IMR-90 (cell line): ENCODE measurements at regions of chr2 and their contacts with region 1.

Region 1: DNA sequence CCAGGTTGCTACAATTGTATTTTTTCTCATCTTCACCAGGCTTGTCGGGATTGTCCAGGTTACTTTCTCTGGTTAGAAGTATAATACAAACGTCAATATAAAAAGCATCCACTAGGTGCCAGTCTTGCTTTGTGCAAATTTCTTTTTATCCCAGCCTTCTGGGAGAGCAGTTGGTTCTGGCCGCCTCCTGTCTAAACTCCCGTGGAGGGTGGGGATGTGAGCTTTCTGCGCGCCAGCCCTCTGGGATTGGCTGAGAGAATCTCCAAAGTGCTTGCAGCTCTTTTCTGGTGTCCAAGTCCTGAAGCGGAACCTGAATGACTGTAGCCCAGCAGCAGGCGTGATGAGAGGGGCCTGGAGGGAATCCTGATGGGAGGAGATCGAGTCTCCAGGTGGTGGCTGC is 22.4 kb upstream of the TOGARAM2 start:
- DNase-seq: peak; percentile 74
- ATAC-seq: peak; percentile 92
- H3K4me3 ChIP-seq: no peak overlapping the region
- H3K27ac ChIP-seq: no peak overlapping the region
- H3K4me1 ChIP-seq: peaks cover 2% of the 10 kb centered on the region; the same call in 1 of the 2 replicates
- H3K27me3 ChIP-seq: no peaks in the 10 kb centered on the region
- CTCF ChIP-seq: peak; percentile 79
- POLR2A ChIP-seq: peak; percentile 53; the same call in 1 of the 2 replicates
- RAD21 ChIP-seq: peak; percentile 98

Region 2: GRCh38 chr2:29196792-29197788 is 238.4 kb after region 1 on chr2:
- CTCF ChIA-PET with region 1: no interaction called
- POLR2A ChIA-PET with region 1: no interaction called
- dilution Hi-C with region 1: no loop called
- in situ Hi-C with region 1: loop called (anchors 5 kb)
- intact Hi-C with region 1: loop called (anchors 1 kb)
- DNase-seq: peak; percentile 47
- ATAC-seq: peak; percentile 80
- H3K4me3 ChIP-seq: no peak overlapping the region
- H3K27ac ChIP-seq: no peak overlapping the region
- H3K4me1 ChIP-seq: peaks cover 3% of the 10 kb centered on the region; the same call in 1 of the 2 replicates
- H3K27me3 ChIP-seq: no peaks in the 10 kb centered on the region
- CTCF ChIP-seq: peak; percentile 73
- POLR2A ChIP-seq: no peak
- RAD21 ChIP-seq: peak; percentile 93

Region 3: GRCh38 chr2:29627279-29627711 is 668.6 kb after region 1 on chr2:
- CTCF ChIA-PET with region 1: no interaction called
- POLR2A ChIA-PET with region 1: no interaction called
- dilution Hi-C with region 1: no loop called
- in situ Hi-C with region 1: no loop called
- intact Hi-C with region 1: loop called (anchors 2 kb)
- DNase-seq: peak; percentile 91
- ATAC-seq: peak; percentile 61
- H3K4me3 ChIP-seq: no peak overlapping the region
- H3K27ac ChIP-seq: no peak overlapping the region; the same call in 1 of the 2 replicates
- H3K4me1 ChIP-seq: peaks cover 11% of the 10 kb centered on the region
- H3K27me3 ChIP-seq: no peaks in the 10 kb centered on the region
- CTCF ChIP-seq: no peak
- POLR2A ChIP-seq: no peak
- RAD21 ChIP-seq: no peak

Region 4: GRCh38 chr2:29923110-29923721 is 964.5 kb after region 1 on chr2:
- CTCF ChIA-PET with region 1: no interaction called
- POLR2A ChIA-PET with region 1: no interaction called
- dilution Hi-C with region 1: no loop called
- in situ Hi-C with region 1: no loop called
- intact Hi-C with region 1: loop called (anchors 5 kb)
- DNase-seq: peak; percentile 54
- ATAC-seq: peak; percentile 50; the same call in 1 of the 2 replicates
- H3K4me3 ChIP-seq: no peak overlapping the region
- H3K27ac ChIP-seq: no peak overlapping the region
- H3K4me1 ChIP-seq: no peaks in the 10 kb centered on the region
- H3K27me3 ChIP-seq: peaks cover 28% of the 10 kb centered on the region
- CTCF ChIP-seq: peak; percentile 79
- POLR2A ChIP-seq: no peak
- RAD21 ChIP-seq: peak; percentile 56

Region 5: DNA sequence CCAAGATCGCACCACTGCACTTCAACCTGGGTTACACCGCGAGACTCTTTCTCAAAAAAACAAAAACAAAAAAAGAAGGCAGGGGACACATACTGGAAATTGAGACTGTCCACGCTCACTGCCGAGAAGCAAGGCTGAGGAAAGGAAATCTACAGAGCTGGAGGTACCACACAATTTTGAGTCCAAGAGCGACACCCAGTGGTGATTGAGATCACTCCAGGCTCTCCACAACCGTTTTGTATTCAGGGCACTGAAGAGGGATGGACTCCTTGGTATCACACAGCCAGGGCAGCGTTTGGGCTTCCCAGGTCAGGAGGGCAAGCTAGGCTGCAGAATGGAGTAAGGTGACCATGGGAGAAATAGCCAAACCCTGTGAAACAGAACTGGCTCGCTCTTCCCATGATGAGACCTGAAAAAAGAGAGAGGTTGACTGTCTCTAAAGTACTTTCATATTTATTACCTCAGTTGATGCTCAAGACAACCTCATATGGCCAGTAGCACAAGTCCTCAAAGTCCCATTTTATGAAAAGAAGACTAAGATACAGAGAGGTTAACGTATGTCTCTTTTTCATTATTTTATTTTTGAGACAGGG is 1113.7 kb after region 1 on chr2:
- CTCF ChIA-PET with region 1: no interaction called
- POLR2A ChIA-PET with region 1: no interaction called
- dilution Hi-C with region 1: no loop called
- in situ Hi-C with region 1: loop called (anchors 5 kb)
- intact Hi-C with region 1: loop called (anchors 1 kb)
- DNase-seq: peak; percentile 72
- ATAC-seq: peak; percentile 96
- H3K4me3 ChIP-seq: no peak overlapping the region
- H3K27ac ChIP-seq: no peak overlapping the region
- H3K4me1 ChIP-seq: no peaks in the 10 kb centered on the region
- H3K27me3 ChIP-seq: peaks cover 21% of the 10 kb centered on the region
- CTCF ChIP-seq: peak; percentile 78
- POLR2A ChIP-seq: no peak
- RAD21 ChIP-seq: peak; percentile 77